Body of pancreas (tissue), 4 donors: ENCODE measurements at regions of chr19 and their contacts with region 1.

Region 1: GRCh38 chr19:2171349-2172145 is 7.8 kb downstream of the DOT1L start:
- DNase-seq: peak; percentile 55 to 69 (median 62)
- ATAC-seq: peak; percentile 7
- H3K4me3 ChIP-seq: no peak overlapping the region
- H3K27ac ChIP-seq: peak overlapping the region; percentile 69 to 99 (median 97)
- H3K4me1 ChIP-seq: peaks cover 81% of the 10 kb centered on the region
- H3K27me3 ChIP-seq: no peaks in the 10 kb centered on the region
- CTCF ChIP-seq: peak in 2 of 7 experiments; percentile 12
- POLR2A ChIP-seq: peak in 1 of 3 donors; percentile 40

Region 2: GRCh38 chr19:2227415-2228156 is 56.0 kb after region 1 on chr19:
- intact Hi-C with region 1: loop called (anchors 5 kb)
- DNase-seq: peak in 1 of 4 donors; percentile 27
- ATAC-seq: no peak
- H3K4me3 ChIP-seq: no peak overlapping the region
- H3K27ac ChIP-seq: no peak overlapping the region
- H3K4me1 ChIP-seq: peaks cover 11% of the 10 kb centered on the region
- H3K27me3 ChIP-seq: no peaks in the 10 kb centered on the region
- CTCF ChIP-seq: no peak
- POLR2A ChIP-seq: no peak